Activated CD4-positive, alpha-beta T cell treated with anti-CD3 and anti-CD28 coated beads for 36 hours (primary cell): ENCODE measurements at regions of chr13 and their contacts with region 1.

Region 1: DNA sequence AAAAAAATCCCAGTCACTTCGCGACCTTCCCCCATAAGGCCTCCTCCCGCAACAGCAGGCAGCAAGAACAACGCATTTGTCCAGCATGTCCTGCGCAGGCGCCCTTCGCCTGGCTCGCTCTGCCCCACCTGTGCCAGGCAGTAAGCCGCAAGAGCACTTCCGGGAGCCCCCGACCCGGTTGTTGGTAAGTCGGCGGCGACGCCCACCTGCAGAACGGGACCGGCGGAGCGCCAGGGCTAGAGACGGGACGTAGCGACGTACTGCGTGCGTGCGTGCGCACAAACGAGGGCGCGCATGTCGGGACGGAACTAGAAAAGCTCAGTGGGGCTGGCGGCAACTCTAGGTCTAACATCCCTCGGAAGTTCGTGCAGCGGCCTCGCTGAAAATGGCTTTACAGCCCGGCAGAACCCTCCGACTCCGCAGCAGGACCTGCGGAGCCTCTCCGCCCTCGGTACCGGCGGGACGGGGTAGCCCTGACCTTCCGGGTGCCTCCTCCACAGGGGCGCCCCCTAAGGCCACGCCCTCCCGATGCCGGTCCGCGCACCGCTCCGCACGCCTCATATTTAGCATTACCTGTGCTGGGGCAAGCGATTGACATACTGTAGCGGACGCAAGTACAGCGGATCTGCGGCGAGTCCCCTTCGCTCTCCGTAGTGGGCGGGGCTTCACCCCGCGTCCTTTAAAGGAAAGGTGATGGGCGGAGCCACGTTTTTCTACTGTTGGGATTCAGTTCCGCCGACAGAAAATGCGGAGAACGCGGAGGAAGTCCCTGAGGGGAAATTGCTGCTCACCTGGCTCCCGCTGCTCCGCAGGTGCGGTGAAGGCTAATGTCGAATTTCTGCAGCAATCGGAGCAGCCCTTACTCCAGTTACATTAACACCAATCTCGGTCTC is at the start of gene MTIF3:
- DNase-seq: peak; percentile 98
- ATAC-seq: peak; percentile 86
- H3K4me3 Mint-ChIP-seq: peak within 1 kb of the TSS; percentile 89
- H3K27ac Mint-ChIP-seq: peak within 1 kb of the TSS; percentile 99
- H3K4me1 Mint-ChIP-seq: peaks cover 53% of the 10 kb centered on the region
- H3K27me3 Mint-ChIP-seq: no peaks in the 10 kb centered on the region
- total RNA-seq, gene MTIF3: 27.5 to 43.0 TPM

Region 2: GRCh38 chr13:27374650-27375049 is 75.5 kb before region 1 on chr13:
- CTCF ChIA-PET with region 1: no interaction called
- POLR2A ChIA-PET with region 1: no interaction called
- intact Hi-C with region 1: loop called in 1 of 2 experiments (anchors 2 kb)
- DNase-seq: peak; percentile 72
- ATAC-seq: peak; percentile 95
- H3K4me3 Mint-ChIP-seq: no peak overlapping the region
- H3K27ac Mint-ChIP-seq: no peak overlapping the region
- H3K4me1 Mint-ChIP-seq: peaks cover 3% of the 10 kb centered on the region
- H3K27me3 Mint-ChIP-seq: peaks cover 15% of the 10 kb centered on the region

Region 3: DNA sequence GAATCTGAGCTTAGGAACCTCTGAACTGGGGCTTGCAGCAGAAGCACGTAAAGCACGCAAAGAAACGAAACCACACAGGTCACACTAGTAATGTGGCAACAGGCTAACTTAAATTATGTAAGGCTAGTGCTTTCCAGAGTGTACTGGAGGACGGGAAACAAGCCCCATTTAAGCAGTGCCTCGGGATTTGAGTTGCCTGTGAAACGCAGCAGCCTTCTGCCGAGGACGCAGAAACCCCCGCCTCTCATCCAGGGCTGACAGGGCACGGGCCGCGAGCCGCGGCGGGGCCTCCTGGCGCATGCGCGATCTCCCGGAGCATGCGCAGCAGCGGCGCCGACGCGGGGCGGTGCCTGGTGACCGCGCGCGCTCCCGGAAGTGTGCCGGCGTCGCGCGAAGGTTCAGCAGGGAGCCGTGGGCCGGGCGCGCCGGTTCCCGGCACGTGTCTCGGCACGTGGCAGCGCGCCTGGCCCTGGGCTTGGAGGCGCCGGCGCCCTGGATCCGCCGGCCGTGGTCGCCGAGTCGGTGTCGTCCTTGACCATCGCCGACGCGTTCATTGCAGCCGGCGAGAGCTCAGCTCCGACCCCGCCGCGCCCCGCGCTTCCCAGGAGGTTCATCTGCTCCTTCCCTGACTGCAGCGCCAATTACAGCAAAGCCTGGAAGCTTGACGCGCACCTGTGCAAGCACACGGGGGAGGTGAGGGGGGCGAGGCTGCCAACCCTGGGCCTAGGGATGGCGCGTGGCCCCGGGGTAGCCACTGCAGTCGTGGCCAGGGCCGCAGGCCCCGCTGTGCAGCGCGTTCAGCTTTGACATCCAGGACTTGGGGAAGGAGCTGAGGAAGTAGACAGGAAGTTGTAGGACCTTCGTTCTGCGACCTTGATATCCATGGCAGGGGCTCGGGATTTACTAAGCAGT is 25.7 kb before region 1 on chr13 and contains the start of gene GTF3A:
- CTCF ChIA-PET with region 1: interaction called, 23 read pairs
- POLR2A ChIA-PET with region 1: interaction called, 42 read pairs
- intact Hi-C with region 1: loop called (anchors 1 kb)
- DNase-seq: peak; percentile 92
- ATAC-seq: peak; percentile 66
- H3K4me3 Mint-ChIP-seq: peak within 1 kb of the TSS; percentile 80
- H3K27ac Mint-ChIP-seq: peak within 1 kb of the TSS; percentile 97
- H3K4me1 Mint-ChIP-seq: peaks cover 45% of the 10 kb centered on the region
- H3K27me3 Mint-ChIP-seq: no peaks in the 10 kb centered on the region
- total RNA-seq, gene GTF3A: 177 to 208 TPM

Region 4: GRCh38 chr13:27482983-27483382 is 32.8 kb after region 1 on chr13:
- CTCF ChIA-PET with region 1: no interaction called
- POLR2A ChIA-PET with region 1: no interaction called
- intact Hi-C with region 1: no loop called
- DNase-seq: no peak
- ATAC-seq: no peak
- H3K4me3 Mint-ChIP-seq: no peak overlapping the region
- H3K27ac Mint-ChIP-seq: no peak overlapping the region
- H3K4me1 Mint-ChIP-seq: peaks cover 4% of the 10 kb centered on the region
- H3K27me3 Mint-ChIP-seq: no peaks in the 10 kb centered on the region

Region 5: GRCh38 chr13:27620377-27621115 is 170.4 kb after region 1 on chr13 and contains the start of gene LNX2:
- CTCF ChIA-PET with region 1: no interaction called
- POLR2A ChIA-PET with region 1: interaction called, 5 read pairs
- intact Hi-C with region 1: loop called (anchors 1 kb)
- DNase-seq: peak; percentile 98
- ATAC-seq: peak; percentile 92
- H3K4me3 Mint-ChIP-seq: peak within 1 kb of the TSS; percentile 92
- H3K27ac Mint-ChIP-seq: peak within 1 kb of the TSS; percentile 91
- H3K4me1 Mint-ChIP-seq: peaks cover 51% of the 10 kb centered on the region
- H3K27me3 Mint-ChIP-seq: no peaks in the 10 kb centered on the region
- total RNA-seq, gene LNX2: 4.7 to 4.8 TPM